Endothelial cell of umbilical vein (primary cell): ENCODE measurements at regions of chr5 and their contacts with region 1.

Region 1: GRCh38 chr5:138605254-138605972 is 30.2 kb upstream of the HSPA9 start:
- DNase-seq: peak; percentile 13
- H3K4me3 ChIP-seq: no peak overlapping the region
- H3K27ac ChIP-seq: no peak overlapping the region
- H3K4me1 ChIP-seq: peaks cover 7% of the 10 kb centered on the region
- H3K27me3 ChIP-seq: peaks cover 5 to 22% of the 10 kb centered on the region in 2 experiments
- CTCF ChIP-seq: no peak
- POLR2A ChIP-seq: no peak

Region 2: DNA sequence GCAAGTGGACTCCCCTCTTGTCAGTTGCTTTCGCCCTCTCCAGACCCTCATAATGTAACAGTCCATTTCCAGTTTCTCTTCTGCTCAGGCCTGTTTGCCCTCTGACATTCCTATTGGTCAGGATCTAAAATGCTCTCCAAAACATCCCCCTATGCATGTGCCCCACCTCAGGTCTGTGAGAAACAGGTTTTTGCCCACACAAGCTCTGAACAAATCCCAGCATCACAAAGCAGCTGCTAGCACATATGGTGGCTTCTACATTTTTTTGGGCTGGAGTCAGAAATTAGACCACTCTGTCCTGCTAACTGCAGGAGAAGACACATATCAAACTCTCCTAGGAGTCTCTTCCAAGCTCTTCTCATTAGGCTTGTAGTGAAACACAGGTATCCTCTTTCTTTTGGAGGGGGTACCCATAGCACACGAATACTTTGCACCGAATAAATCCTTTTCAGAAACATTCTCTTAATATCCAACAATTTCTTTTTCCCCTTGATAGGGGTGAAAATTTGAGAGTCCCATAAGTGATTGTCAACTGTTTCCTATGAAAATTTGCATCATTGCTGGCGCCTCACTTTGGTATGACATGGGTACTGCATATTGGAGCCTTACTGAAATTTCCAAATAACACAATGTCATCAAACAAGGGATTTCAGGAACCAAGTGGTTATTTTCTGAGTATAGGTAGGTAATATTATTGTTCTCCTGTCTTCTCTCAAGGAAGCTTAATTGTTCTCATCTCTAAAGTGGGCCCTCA is 10.9 kb before region 1 on chr5:
- CTCF ChIA-PET with region 1: interaction called, 25 read pairs
- POLR2A ChIA-PET with region 1: interaction called, 5 read pairs
- dilution Hi-C with region 1: no loop called
- intact Hi-C with region 1: no loop called
- DNase-seq: no peak
- H3K4me3 ChIP-seq: no peak overlapping the region
- H3K27ac ChIP-seq: no peak overlapping the region
- H3K4me1 ChIP-seq: no peaks in the 10 kb centered on the region
- H3K27me3 ChIP-seq: peaks cover 9 to 11% of the 10 kb centered on the region in 2 experiments
- CTCF ChIP-seq: peak; percentile 9 to 22
- POLR2A ChIP-seq: no peak